ENCODE measurements at regions of chr3 and their contacts with region 1.

Region 1: GRCh38 chr3:12994607-12995388 is 78.4 kb downstream of the IQSEC1 start:
- DNase-seq: peak; percentile 86
- ATAC-seq: peak; percentile 90
- H3K4me3 Mint-ChIP-seq: peak overlapping the region; percentile 76
- H3K27ac Mint-ChIP-seq: peak overlapping the region; percentile 44
- H3K4me1 Mint-ChIP-seq: peaks cover 25% of the 10 kb centered on the region
- H3K27me3 Mint-ChIP-seq: no peaks in the 10 kb centered on the region

Region 2: GRCh38 chr3:12553921-12554391 is 440.8 kb before region 1 on chr3:
- CTCF ChIA-PET with region 1: no interaction called
- POLR2A ChIA-PET with region 1: no interaction called
- DNase-seq: no peak
- ATAC-seq: no peak
- H3K4me3 Mint-ChIP-seq: peak overlapping the region; percentile 82
- H3K27ac Mint-ChIP-seq: no peak overlapping the region
- H3K4me1 Mint-ChIP-seq: peaks cover 29% of the 10 kb centered on the region
- H3K27me3 Mint-ChIP-seq: peaks cover 28% of the 10 kb centered on the region

Region 3: DNA sequence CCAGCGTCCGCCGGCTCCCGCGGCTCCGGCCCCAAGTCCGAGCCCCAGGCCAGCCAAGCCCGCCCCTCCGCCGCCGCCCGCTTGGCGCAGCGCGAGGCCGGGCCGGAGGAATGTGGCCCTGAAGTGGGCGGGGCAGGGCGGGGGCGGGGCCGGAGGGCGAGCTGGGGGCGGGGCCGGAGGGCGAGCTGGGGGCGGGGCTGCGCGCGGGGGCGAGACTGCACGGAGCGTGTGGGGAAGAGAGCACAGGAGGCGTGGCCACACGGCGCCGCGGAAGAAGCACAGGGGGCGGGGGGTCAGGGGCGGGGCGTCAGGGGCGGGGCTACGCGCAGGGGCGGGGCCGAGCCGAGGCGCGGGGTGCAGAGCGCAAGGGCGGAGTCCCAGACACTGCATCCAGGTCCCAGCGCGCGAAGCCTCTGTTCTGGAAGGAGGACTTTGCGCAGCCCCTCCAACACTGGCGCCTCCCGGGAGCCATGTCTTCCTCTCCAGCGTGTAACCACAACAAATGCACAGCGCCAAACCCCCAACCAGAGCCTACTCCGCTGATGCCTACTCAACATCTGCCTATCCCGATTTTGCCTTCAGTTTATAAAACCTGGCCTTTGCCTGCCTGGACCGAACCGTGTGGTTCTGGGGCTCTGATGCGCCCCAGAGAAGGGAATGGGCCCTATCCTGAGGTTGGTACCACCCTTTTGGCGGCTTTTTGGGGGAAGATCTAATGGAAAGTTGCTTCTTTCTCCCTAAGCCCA is 27.0 kb before region 1 on chr3:
- CTCF ChIA-PET with region 1: interaction called, 14 read pairs
- POLR2A ChIA-PET with region 1: no interaction called
- DNase-seq: peak; percentile 90
- ATAC-seq: peak; percentile 95
- H3K4me3 Mint-ChIP-seq: peak overlapping the region; percentile 62
- H3K27ac Mint-ChIP-seq: no peak overlapping the region
- H3K4me1 Mint-ChIP-seq: peaks cover 50% of the 10 kb centered on the region
- H3K27me3 Mint-ChIP-seq: peaks cover 4% of the 10 kb centered on the region

Region 4: DNA sequence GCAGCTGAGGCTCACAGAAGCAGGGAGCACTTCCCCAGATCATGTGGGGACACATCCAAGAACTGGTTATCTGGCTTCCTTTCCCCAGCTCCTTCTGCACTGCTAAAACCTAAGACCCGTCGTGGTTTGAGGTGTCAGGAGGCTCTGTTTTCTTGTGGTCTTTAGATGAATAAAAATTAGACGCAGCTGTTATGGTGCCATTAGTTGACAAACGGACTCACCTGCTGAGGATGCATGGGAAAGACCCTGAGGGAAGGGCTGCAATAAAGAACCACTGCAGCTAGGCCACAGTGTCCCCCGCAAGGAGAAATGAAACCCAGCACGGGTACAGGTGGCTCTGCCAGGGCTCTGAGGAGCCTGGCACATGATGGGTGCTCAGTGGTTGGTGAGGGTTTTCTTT is 21.0 kb before region 1 on chr3:
- CTCF ChIA-PET with region 1: interaction called, 14 read pairs
- POLR2A ChIA-PET with region 1: no interaction called
- DNase-seq: no peak
- ATAC-seq: no peak
- H3K4me3 Mint-ChIP-seq: no peak overlapping the region
- H3K27ac Mint-ChIP-seq: no peak overlapping the region
- H3K4me1 Mint-ChIP-seq: peaks cover 18% of the 10 kb centered on the region
- H3K27me3 Mint-ChIP-seq: no peaks in the 10 kb centered on the region

Region 5: DNA sequence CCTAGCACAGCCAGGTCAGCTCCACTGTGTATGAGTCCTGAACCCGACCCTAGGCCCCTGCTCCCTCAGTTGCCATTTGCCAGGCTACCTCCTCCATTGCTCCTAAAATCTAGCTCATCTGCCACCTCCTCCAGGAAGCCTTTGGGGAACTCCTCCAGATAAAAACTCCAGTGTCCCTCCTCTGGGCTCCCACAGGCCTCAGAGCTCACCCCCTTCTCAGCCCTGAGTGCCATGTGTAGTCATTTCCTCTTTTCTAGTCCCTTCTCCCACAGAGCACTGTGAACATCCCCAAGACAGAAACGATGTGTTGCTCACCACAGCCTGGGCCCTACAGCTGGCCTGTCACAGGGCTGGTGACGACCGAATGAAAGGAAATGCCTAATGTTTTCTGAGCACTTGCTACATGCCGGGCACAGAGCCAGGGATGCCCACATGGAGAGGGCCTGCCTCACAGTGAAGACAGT is 17.5 kb after region 1 on chr3:
- CTCF ChIA-PET with region 1: interaction called, 46 read pairs
- POLR2A ChIA-PET with region 1: interaction called, 3 read pairs
- DNase-seq: peak; percentile 66
- ATAC-seq: peak; percentile 26
- H3K4me3 Mint-ChIP-seq: peak overlapping the region; percentile 68
- H3K27ac Mint-ChIP-seq: peak overlapping the region; percentile 97
- H3K4me1 Mint-ChIP-seq: peaks cover 96% of the 10 kb centered on the region
- H3K27me3 Mint-ChIP-seq: no peaks in the 10 kb centered on the region

Region 6: DNA sequence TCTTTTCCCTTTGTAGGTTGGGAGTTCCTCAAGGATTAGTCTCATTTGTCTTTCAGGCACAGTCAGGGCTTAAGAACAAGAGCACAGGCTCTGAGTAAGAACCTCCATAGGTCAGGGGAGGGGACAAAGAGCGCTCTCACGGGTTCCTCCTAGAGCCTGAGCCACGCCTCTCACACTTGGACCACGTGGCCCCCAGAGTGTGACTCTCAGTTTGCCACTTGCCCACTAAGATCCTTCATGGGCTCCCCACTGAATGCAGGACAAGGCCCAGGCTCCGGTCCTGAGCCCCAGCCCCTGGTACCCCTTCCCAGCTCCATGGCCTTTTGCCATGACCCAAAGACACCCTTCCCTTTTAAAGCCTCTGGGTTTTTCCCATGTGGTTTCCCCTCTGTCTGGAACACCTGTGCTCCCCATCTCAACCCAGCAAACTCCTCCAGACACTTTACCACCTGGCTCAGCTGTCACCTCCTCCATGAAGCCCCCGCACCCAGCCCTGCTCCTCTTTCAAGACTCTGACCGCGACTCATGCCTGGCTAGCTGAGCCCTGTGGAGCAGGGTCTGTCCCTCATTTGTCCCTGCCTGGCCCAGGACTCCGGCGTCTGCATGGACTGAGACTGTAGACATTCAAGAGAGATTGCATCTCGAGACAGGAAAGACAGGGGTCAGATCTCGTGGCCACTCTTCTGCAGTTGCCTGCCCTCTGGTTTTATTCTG is 45.7 kb after region 1 on chr3:
- CTCF ChIA-PET with region 1: interaction called, 13 read pairs
- POLR2A ChIA-PET with region 1: no interaction called
- DNase-seq: peak; percentile 44
- ATAC-seq: peak; percentile 71
- H3K4me3 Mint-ChIP-seq: no peak overlapping the region
- H3K27ac Mint-ChIP-seq: no peak overlapping the region
- H3K4me1 Mint-ChIP-seq: peaks cover 15% of the 10 kb centered on the region
- H3K27me3 Mint-ChIP-seq: no peaks in the 10 kb centered on the region